Common myeloid progenitor, CD34-positive (primary cell): ENCODE measurements at regions of chr11 and their contacts with region 1.

Region 1: GRCh38 chr11:95067039-95067840 is 521 bp downstream of the SRSF8 start:
- DNase-seq: peak; percentile 69 to 85 (median 77)
- H3K4me3 ChIP-seq: peak overlapping the region; percentile 80 to 97 (median 92)
- H3K27ac ChIP-seq: peak overlapping the region; percentile 77 to 93
- H3K4me1 ChIP-seq: peaks cover 4 to 25% (median 19%) of the 10 kb centered on the region in 4 experiments
- H3K27me3 ChIP-seq: no peaks in the 10 kb centered on the region

Region 2: GRCh38 chr11:94997437-94997836 is 69.8 kb before region 1 on chr11:
- CTCF ChIA-PET with region 1: no interaction called
- POLR2A ChIA-PET with region 1: no interaction called
- DNase-seq: peak in 2 of 3 donors; percentile 1 to 4
- H3K4me3 ChIP-seq: no peak overlapping the region
- H3K27ac ChIP-seq: no peak overlapping the region
- H3K4me1 ChIP-seq: no peaks in the 10 kb centered on the region
- H3K27me3 ChIP-seq: no peaks in the 10 kb centered on the region

Region 3: DNA sequence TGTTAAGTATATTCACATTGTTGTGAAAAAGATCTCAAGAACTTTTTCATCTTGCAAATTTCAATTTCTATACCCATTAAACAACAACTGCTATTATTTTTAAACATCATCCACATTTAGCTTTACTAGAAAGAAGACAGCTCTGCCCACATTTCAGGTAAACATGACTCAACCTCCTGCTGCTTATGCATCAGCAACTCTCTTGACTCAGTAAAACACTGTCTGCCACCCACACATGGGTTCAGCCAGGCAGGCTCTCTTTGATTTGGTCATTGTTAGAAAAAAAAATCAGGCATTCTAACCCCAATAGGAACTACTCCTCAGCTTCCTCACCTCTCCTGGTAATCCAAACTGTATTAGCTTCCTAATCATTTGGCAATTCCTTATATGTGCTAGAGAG is 17.3 kb after region 1 on chr11:
- CTCF ChIA-PET with region 1: interaction called, 123 read pairs
- POLR2A ChIA-PET with region 1: interaction called, 20 read pairs
- DNase-seq: no peak
- H3K4me3 ChIP-seq: no peak overlapping the region
- H3K27ac ChIP-seq: no peak overlapping the region
- H3K4me1 ChIP-seq: peaks cover 0 to 10% (median 7%) of the 10 kb centered on the region in 4 experiments
- H3K27me3 ChIP-seq: no peaks in the 10 kb centered on the region